Natural killer cell (primary cell): ENCODE measurements at regions of chr16 and their contacts with region 1.

Region 1: DNA sequence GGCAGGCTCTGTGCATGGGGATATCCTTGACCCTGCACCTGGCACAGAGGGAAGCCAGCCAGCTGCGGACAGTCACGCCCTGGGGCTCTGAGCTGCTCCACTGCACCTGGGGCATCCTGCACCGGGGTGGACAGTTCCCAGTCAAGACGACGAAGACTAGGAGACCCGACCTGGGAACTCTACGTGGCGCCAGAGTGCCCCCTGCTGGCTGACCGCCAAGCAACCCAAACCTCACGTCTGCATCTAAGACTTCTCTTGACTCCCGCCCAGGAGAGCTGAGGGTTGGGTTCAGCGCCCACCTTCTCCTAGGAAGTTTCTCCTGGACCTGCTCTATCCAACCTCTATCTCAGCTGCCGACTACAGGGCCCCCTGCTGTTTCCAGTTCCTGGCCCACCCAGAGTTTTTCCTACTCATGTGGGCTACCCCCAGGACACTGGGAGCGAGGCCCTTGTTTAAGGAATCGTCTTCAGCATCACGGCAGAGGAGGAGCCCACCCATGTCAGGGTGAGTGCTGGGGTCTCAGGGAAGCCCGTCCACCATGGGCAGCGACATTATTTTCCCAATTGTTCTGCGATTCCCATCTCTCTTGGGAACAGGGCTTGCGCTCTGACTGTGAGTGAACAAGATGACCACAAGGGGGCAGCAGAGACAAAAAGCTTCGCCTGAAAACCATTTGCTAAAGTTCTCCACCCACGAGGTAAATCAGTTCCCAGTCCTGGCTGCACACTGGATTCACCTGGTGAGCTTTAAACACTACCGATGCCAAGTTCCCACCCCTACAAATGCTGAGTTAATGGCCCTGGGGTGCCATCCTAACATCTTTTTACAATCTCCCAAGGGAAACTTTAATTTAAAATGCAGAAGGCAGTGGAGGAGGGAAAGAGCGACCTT is 29.3 kb downstream of the TLE7 start:
- DNase-seq: peak; percentile 49 to 83
- ATAC-seq: peak; percentile 53 to 78 (median 65)
- H3K4me3 ChIP-seq: no peak overlapping the region
- H3K4me3 Mint-ChIP-seq: no peak overlapping the region
- H3K27ac ChIP-seq: no peak overlapping the region
- H3K27ac Mint-ChIP-seq: no peak overlapping the region
- H3K4me1 ChIP-seq: peaks cover 5% of the 10 kb centered on the region
- H3K4me1 Mint-ChIP-seq: peaks cover 0 to 9% of the 10 kb centered on the region in 2 donors
- H3K27me3 ChIP-seq: no peaks in the 10 kb centered on the region
- H3K27me3 Mint-ChIP-seq: peaks cover 36% of the 10 kb centered on the region in 2 donors
- CTCF ChIP-seq: peak; percentile 95

Region 2: GRCh38 chr16:71351558-71351901 is 61.0 kb before region 1 on chr16:
- intact Hi-C with region 1: no loop called
- DNase-seq: no peak
- ATAC-seq: no peak
- H3K4me3 ChIP-seq: no peak overlapping the region
- H3K4me3 Mint-ChIP-seq: no peak overlapping the region
- H3K27ac ChIP-seq: no peak overlapping the region
- H3K27ac Mint-ChIP-seq: no peak overlapping the region
- H3K4me1 ChIP-seq: no peaks in the 10 kb centered on the region
- H3K4me1 Mint-ChIP-seq: no peaks in the 10 kb centered on the region
- H3K27me3 ChIP-seq: no peaks in the 10 kb centered on the region
- H3K27me3 Mint-ChIP-seq: peaks cover 6 to 29% of the 10 kb centered on the region in 2 donors
- CTCF ChIP-seq: no peak

Region 3: GRCh38 chr16:71441348-71441781 is 28.9 kb after region 1 on chr16:
- intact Hi-C with region 1: no loop called
- DNase-seq: peak; percentile 41 to 48
- ATAC-seq: peak in 2 of 3 donors; percentile 35 to 65
- H3K4me3 ChIP-seq: no peak overlapping the region
- H3K4me3 Mint-ChIP-seq: no peak overlapping the region
- H3K27ac ChIP-seq: no peak overlapping the region
- H3K27ac Mint-ChIP-seq: no peak overlapping the region
- H3K4me1 ChIP-seq: no peaks in the 10 kb centered on the region
- H3K4me1 Mint-ChIP-seq: peaks cover 0 to 5% of the 10 kb centered on the region in 2 donors
- H3K27me3 ChIP-seq: no peaks in the 10 kb centered on the region
- H3K27me3 Mint-ChIP-seq: peaks cover 7 to 12% of the 10 kb centered on the region in 2 donors
- CTCF ChIP-seq: peak; percentile 60

Region 4: DNA sequence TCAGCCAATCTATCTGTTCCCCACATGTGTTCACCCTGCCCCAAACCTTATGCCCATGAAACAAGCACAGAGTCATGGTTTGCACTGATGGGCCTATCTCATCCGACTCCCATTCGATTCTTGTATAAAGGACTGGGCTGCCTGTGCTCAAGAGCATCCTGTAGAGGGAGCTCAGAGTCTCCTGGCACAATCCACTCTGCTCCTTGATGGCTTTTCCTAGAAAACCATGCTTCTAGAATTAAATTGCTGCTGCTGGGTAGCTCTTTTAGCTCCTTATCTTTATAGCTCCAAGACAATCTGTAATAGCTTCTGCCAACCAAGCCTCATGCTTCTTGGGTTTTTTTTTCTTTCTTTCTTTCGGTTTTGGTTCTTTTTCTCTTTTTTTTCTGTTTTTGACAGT is 66.9 kb after region 1 on chr16:
- intact Hi-C with region 1: no loop called
- DNase-seq: no peak
- ATAC-seq: no peak
- H3K4me3 ChIP-seq: no peak overlapping the region
- H3K4me3 Mint-ChIP-seq: no peak overlapping the region
- H3K27ac ChIP-seq: no peak overlapping the region
- H3K27ac Mint-ChIP-seq: no peak overlapping the region
- H3K4me1 ChIP-seq: peaks cover 4% of the 10 kb centered on the region
- H3K4me1 Mint-ChIP-seq: peaks cover 7 to 11% of the 10 kb centered on the region in 2 donors
- H3K27me3 ChIP-seq: no peaks in the 10 kb centered on the region
- H3K27me3 Mint-ChIP-seq: no peaks in the 10 kb centered on the region
- CTCF ChIP-seq: no peak

Region 5: GRCh38 chr16:71499775-71500364 is 87.4 kb after region 1 on chr16:
- intact Hi-C with region 1: loop called (anchors 2 kb)
- DNase-seq: peak; percentile 22 to 83
- ATAC-seq: peak; percentile 54 to 78 (median 78)
- H3K4me3 ChIP-seq: no peak overlapping the region
- H3K4me3 Mint-ChIP-seq: no peak overlapping the region
- H3K27ac ChIP-seq: no peak overlapping the region
- H3K27ac Mint-ChIP-seq: no peak overlapping the region
- H3K4me1 ChIP-seq: no peaks in the 10 kb centered on the region
- H3K4me1 Mint-ChIP-seq: no peaks in the 10 kb centered on the region
- H3K27me3 ChIP-seq: no peaks in the 10 kb centered on the region
- H3K27me3 Mint-ChIP-seq: peaks cover 0 to 19% of the 10 kb centered on the region in 2 donors
- CTCF ChIP-seq: peak; percentile 83

Region 6: DNA sequence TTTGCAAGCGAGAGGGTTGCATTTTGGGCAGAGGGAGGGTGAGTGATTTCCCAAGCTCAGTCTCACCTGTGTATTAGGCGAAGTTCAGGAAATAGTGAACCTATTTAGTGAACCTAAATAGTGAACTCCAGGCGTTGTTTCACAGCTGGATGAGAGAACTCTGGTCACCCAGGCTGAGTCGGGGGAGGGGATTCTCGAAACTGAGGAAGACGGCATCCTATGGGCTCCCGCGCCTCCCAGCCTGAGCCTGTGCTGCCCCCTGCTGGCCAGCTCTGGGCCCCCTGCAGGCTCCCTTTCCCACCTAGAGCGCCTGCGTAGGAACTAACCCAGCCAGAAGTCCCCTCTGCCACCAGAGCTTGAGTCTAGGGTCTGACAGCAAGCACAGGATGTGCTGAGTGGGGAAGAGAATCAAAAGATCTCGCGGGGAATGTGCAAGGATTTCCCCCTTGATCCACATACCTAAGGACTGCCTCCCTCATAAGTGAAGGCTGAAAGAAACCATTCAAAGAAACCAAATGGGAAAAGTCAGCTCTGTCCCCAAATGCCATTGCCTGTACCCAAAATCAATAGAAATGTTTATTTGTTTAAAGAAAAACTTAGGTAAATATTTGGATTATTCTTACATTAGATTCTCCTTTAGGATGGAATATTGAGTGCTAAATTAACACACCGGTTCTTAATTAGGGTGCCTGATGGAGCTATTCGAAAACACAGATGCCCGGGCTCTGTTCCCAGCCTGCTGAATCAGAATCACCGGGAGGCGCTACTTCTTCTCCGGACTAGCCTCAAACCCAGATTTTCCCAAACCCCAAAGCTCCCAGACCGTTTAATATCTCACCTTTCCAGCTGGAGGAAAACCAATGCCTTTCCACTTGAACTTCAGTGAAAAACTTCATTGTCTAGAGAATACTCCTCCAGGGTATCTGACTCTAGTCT is 198.7 kb after region 1 on chr16:
- intact Hi-C with region 1: loop called (anchors 1 kb)
- DNase-seq: peak; percentile 68 to 85
- ATAC-seq: peak; percentile 77 to 97 (median 89)
- H3K4me3 ChIP-seq: no peak overlapping the region
- H3K4me3 Mint-ChIP-seq: no peak overlapping the region
- H3K27ac ChIP-seq: no peak overlapping the region
- H3K27ac Mint-ChIP-seq: no peak overlapping the region
- H3K4me1 ChIP-seq: peaks cover 5% of the 10 kb centered on the region
- H3K4me1 Mint-ChIP-seq: no peaks in the 10 kb centered on the region
- H3K27me3 ChIP-seq: no peaks in the 10 kb centered on the region
- H3K27me3 Mint-ChIP-seq: peaks cover 0 to 12% of the 10 kb centered on the region in 2 donors
- CTCF ChIP-seq: peak; percentile 88

Region 7: GRCh38 chr16:71746442-71747046 is 334.0 kb after region 1 on chr16:
- intact Hi-C with region 1: loop called (anchors 10 kb)
- DNase-seq: peak in 1 of 2 donors; percentile 74
- ATAC-seq: peak; percentile 57 to 75 (median 60)
- H3K4me3 ChIP-seq: no peak overlapping the region
- H3K4me3 Mint-ChIP-seq: no peak overlapping the region
- H3K27ac ChIP-seq: no peak overlapping the region
- H3K27ac Mint-ChIP-seq: no peak overlapping the region
- H3K4me1 ChIP-seq: no peaks in the 10 kb centered on the region
- H3K4me1 Mint-ChIP-seq: peaks cover 0 to 5% of the 10 kb centered on the region in 2 donors
- H3K27me3 ChIP-seq: no peaks in the 10 kb centered on the region
- H3K27me3 Mint-ChIP-seq: no peaks in the 10 kb centered on the region
- CTCF ChIP-seq: peak; percentile 77

Region 8: DNA sequence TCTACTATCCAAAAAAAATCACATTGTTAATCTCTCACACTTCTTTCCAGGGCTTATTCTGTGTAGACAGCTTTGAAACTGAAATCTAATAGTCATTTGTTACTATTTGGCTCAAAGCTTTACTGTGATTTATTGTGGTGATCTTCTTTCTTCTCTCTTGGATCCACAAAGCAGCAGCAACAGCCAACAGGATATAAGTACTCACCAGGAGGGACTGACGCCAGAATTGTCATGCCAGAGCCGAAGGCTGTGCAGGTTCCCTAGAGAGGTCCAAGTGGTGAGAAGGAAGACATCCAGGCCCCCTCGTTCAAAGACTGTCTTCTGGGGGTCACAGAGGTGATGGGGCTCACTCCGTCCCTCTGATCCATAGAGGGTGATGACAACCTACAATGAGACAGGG is 554.4 kb after region 1 on chr16:
- intact Hi-C with region 1: loop called (anchors 5 kb)
- DNase-seq: no peak
- ATAC-seq: no peak
- H3K4me3 ChIP-seq: no peak overlapping the region
- H3K4me3 Mint-ChIP-seq: no peak overlapping the region
- H3K27ac ChIP-seq: no peak overlapping the region
- H3K27ac Mint-ChIP-seq: no peak overlapping the region
- H3K4me1 ChIP-seq: no peaks in the 10 kb centered on the region
- H3K4me1 Mint-ChIP-seq: no peaks in the 10 kb centered on the region
- H3K27me3 ChIP-seq: no peaks in the 10 kb centered on the region
- H3K27me3 Mint-ChIP-seq: no peaks in the 10 kb centered on the region
- CTCF ChIP-seq: no peak